ENCODE measurements at regions of chr6 and their contacts with region 1.

Region 1: DNA sequence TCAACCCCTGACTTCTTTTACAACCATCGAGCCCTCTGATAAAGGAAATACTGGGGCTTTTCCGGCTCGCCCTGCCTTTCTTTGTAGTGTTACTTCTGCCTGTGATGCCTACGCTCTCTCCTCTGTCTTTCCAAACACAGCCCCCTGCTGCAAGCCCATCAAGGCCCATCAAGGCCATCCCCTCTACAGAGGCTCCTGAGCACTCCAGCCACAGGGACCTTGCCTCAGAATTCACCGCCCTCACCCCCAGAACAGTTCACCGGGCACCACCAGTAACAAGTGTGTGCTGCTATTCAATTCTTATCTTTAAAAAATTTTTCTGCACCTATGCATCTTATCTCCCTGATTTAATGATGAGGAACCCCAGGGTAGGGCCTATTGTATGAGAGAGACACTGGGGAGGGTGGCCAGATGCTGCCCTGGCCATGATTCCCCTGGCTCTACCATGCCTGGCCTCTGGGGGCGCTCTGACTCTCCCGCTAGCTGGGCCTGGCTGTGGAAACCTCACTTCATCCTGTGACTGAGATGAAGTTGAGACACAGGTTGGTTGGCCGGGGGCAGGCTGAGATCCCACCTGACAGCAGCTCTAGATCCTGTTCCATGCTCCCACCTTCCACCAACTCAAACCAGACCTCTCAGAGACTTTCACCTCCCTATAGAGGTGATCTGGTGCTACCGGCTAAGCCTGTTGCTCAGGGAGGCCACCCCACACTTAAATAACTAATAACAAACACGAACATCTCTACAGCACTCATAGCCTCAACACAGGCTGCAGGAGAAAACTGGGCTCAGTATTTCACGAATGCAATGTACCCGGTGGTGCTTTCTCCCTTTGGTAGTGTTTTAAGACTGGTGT is 19.2 kb upstream of the GLP1R start:
- DNase-seq: no peak
- ATAC-seq: peak; percentile 96
- H3K4me3 ChIP-seq: no peak overlapping the region
- H3K27ac ChIP-seq: no peak overlapping the region
- H3K4me1 ChIP-seq: no peaks in the 10 kb centered on the region
- H3K27me3 ChIP-seq: no peaks in the 10 kb centered on the region; a peak in 1 of 4 replicates
- CTCF ChIP-seq: peak; percentile 79 to 94 (median 83)
- EP300 ChIP-seq: no peak
- POLR2A ChIP-seq: no peak
- RAD21 ChIP-seq: peak; percentile 57

Region 2: GRCh38 chr6:38773338-38773737 is 256.0 kb before region 1 on chr6:
- CTCF ChIA-PET with region 1: no interaction called
- POLR2A ChIA-PET with region 1: no interaction called
- RAD21 ChIA-PET with region 1: no interaction called
- SMC1A ChIA-PET with region 1: no interaction called
- in situ Hi-C with region 1: no loop called
- intact Hi-C with region 1: no loop called
- DNase-seq: no peak
- ATAC-seq: peak; percentile 9; the same call in 2 of the 3 replicates
- H3K4me3 ChIP-seq: no peak overlapping the region
- H3K27ac ChIP-seq: no peak overlapping the region
- H3K4me1 ChIP-seq: peaks cover 32% of the 10 kb centered on the region
- H3K27me3 ChIP-seq: no peaks in the 10 kb centered on the region
- CTCF ChIP-seq: peak; percentile 26 to 59 (median 58); a peak in 5 of 6 replicates
- EP300 ChIP-seq: no peak
- POLR2A ChIP-seq: no peak
- RAD21 ChIP-seq: peak; percentile 35; the same call in 1 of the 2 replicates

Region 3: DNA sequence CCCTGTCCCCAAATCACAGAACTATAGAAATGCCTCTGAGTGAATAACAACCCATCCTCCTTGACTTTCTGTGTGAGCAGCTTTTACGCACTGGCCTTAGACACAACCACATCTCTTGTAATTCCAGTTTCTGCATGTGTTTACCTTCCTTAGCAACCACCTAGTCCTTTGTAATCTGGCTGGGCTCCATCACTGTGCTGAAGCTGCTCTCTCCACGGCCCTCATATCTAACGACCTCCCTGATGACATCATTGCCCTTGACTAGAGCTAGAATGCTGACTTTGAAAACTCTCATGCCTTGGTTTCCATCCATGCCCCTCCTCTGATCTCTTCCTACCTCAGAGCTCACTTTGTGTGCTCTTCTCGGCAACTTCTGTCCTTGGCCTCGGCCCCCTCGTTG is 11.3 kb before region 1 on chr6:
- CTCF ChIA-PET with region 1: interaction called, 13 read pairs
- POLR2A ChIA-PET with region 1: no interaction called
- RAD21 ChIA-PET with region 1: no interaction called
- SMC1A ChIA-PET with region 1: interaction called, 6 read pairs
- in situ Hi-C with region 1: no loop called
- intact Hi-C with region 1: no loop called
- DNase-seq: no peak
- ATAC-seq: no peak
- H3K4me3 ChIP-seq: no peak overlapping the region
- H3K27ac ChIP-seq: no peak overlapping the region
- H3K4me1 ChIP-seq: no peaks in the 10 kb centered on the region
- H3K27me3 ChIP-seq: peaks cover 0 to 1% of the 10 kb centered on the region in 2 experiments; a peak in 2 of 4 replicates
- CTCF ChIP-seq: no peak
- EP300 ChIP-seq: no peak
- POLR2A ChIP-seq: no peak
- RAD21 ChIP-seq: no peak

Measured in GM12878 (cell line).